Adrenal gland (tissue), 19 donors: ENCODE measurements at regions of chr10 and their contacts with region 1.

Region 1: DNA sequence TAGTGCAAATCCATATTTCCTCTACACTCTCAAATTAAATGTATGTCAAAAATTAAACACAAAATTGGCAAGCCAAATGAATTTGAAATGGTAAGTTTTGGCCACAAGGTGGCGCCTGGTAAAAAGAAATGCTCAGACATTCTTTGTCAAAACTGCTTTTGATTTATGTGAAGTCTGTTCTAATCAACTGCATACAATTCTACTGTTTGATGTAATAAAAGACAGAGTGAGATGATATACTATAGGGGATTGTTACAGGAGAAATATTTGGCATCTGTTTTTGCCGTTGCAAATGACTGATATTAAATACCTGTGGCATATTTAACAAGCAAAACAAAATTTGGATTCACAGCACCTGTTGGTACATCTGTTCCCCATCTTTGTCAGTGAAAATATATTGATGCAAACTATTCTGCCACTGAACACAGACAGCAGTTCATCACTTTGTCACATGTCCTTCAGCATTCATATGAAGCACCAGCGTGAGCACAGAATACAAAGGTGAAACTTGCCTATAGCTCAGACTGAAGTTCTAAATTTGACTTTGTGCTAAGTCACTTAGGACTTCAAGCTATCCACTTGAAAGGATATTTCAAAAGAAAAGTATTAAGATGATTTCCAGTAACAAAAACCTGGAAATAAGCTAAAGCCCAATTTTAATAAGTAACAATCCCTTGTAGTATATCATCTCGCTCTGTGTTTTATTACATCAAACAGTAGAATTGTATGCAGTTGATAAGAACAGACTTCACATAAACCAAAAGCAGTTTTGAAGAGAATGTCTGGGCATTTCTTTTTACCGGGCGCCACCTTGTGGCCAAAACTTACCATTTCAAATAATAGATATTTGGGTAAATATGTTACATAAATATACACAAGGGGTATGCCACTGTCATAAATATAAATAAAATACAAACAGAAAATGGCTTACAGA is 10.2 kb upstream of the CH25H start:
- DNase-seq: peak in 6 of 7 donors; percentile 58 to 85 (median 70)
- H3K4me3 ChIP-seq: peak overlapping the region in 1 of 4 donors; percentile 1
- H3K27ac ChIP-seq: peak overlapping the region in 4 of 5 donors; percentile 7 to 75 (median 44)
- H3K4me1 ChIP-seq: peaks cover 5 to 19% of the 10 kb centered on the region in 2 donors
- H3K27me3 ChIP-seq: no peaks in the 10 kb centered on the region
- CTCF ChIP-seq: peak; percentile 62 to 90 (median 74)
- POLR2A ChIP-seq: no peak

Region 2: DNA sequence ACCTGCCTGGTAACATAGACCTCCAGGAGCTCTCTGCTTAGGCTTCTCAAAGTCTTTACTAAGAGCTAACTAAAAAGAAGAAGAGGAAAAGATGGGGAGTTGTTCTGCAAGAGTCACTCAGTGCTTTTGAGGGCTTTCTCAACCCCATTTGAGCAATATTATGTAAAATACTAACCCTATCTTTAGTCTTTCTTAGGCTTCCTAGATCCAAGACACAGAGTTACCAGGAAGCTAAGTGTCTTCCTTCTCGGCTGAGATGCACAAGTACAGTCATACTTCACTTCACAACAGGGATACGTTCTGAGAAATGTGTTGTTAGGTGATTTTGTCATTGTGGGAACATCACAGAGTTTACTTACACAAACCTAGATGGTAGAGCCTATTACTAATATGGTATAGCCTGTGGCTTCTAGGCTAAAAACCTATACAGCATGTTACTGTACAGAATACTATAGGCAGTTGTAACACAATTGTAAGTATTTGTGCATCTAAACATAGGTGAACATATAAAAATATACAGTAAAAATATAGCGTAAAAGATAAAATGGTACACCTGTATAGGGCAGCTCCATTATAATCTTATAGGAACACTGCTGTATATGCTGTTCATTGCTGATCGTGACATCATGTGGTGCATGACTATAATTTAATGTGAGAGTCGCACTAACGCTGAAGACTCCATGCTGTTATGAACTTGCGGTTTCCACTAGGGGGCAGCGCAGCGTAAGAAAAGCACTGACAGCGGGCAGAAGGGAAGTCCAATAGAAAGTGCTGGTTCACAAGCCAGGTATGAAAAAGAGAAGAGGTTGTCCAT is 382.0 kb before region 1 on chr10:
- intact Hi-C with region 1: loop called (anchors 10 kb)
- DNase-seq: peak; percentile 81 to 93 (median 87)
- H3K4me3 ChIP-seq: no peak overlapping the region
- H3K27ac ChIP-seq: no peak overlapping the region
- H3K4me1 ChIP-seq: peaks cover 0 to 16% of the 10 kb centered on the region in 2 donors
- H3K27me3 ChIP-seq: no peaks in the 10 kb centered on the region
- CTCF ChIP-seq: peak; percentile 83 to 97 (median 94)
- POLR2A ChIP-seq: no peak

Region 3: DNA sequence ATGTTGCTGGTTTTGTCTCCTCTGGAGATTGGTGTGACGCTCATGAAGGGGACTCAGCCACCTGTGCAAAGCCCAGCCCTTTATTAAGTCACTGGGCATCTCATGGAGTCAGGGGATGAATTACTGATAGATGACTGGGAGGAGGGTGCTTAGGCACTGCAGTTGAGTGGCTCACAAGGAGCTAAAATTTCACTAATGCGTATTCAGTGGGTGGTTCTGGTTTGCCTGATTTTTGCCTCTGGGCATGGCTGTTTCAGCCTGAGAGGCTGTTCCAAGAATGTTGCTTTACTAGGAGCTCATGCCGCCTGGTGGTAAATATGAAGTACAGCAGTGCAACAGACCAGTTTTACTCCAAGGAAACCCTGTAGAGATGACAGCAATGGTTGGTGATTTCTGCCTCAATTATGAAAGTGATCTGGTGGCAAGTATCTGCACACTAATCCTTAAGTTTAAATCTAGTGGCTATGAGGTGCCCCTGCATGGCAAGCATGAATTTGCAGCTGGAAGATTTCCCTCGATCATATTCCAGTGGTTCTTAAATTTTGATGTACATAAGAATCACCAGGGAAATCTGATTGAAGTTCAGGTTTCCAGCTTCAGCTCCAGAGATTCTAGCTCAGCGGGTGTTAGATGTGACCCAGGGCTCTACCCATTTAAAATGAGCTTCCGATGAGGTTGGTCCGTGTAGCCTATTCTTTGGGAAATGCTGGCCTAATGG is 284.6 kb before region 1 on chr10:
- intact Hi-C with region 1: loop called (anchors 5 to 10 kb)
- DNase-seq: peak; percentile 57 to 92 (median 76)
- H3K4me3 ChIP-seq: no peak overlapping the region
- H3K27ac ChIP-seq: peak overlapping the region in 4 of 5 donors; percentile 1 to 67 (median 27)
- H3K4me1 ChIP-seq: peaks cover 0 to 26% of the 10 kb centered on the region in 2 donors
- H3K27me3 ChIP-seq: no peaks in the 10 kb centered on the region
- CTCF ChIP-seq: peak; percentile 88 to 98 (median 96)
- POLR2A ChIP-seq: no peak

Region 4: DNA sequence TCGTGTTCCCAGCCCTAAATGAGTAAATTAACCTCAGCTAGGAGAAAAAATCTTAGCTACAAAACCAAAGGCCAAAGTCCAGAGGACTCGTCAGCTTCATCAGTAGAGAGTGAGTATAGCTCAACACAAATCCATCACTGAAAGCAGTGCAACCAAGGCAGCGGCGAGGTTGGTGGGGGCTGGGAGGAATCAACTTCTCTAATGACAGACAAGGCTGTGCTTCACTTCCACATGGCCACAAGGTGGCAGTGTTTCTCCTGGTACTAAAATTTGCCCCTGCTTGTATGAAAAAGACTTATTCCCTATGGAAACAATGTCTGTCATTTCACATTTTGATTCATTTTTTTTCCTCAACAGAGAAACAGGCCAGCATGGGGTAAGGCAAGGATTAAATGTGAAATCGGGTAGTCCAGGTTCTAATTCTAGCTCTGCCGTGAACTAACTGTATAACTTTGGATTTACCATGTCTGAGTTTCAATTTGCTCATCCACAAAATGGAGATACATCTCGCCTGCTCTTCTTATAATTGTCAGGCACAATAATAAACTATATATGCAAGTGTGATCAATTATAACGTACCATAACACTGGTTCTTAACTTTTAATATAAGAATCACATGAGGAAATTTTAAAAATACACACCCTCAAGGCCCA is 187.4 kb before region 1 on chr10:
- intact Hi-C with region 1: loop called (anchors 5 to 10 kb)
- DNase-seq: peak; percentile 74 to 93 (median 82)
- H3K4me3 ChIP-seq: no peak overlapping the region
- H3K27ac ChIP-seq: peak overlapping the region in 1 of 5 donors; percentile 41
- H3K4me1 ChIP-seq: peaks cover 3 to 10% of the 10 kb centered on the region in 2 donors
- H3K27me3 ChIP-seq: no peaks in the 10 kb centered on the region
- CTCF ChIP-seq: peak; percentile 86 to 95 (median 90)
- POLR2A ChIP-seq: no peak